ENCODE measurements at regions of chr19 and their contacts with region 1.

Region 1: DNA sequence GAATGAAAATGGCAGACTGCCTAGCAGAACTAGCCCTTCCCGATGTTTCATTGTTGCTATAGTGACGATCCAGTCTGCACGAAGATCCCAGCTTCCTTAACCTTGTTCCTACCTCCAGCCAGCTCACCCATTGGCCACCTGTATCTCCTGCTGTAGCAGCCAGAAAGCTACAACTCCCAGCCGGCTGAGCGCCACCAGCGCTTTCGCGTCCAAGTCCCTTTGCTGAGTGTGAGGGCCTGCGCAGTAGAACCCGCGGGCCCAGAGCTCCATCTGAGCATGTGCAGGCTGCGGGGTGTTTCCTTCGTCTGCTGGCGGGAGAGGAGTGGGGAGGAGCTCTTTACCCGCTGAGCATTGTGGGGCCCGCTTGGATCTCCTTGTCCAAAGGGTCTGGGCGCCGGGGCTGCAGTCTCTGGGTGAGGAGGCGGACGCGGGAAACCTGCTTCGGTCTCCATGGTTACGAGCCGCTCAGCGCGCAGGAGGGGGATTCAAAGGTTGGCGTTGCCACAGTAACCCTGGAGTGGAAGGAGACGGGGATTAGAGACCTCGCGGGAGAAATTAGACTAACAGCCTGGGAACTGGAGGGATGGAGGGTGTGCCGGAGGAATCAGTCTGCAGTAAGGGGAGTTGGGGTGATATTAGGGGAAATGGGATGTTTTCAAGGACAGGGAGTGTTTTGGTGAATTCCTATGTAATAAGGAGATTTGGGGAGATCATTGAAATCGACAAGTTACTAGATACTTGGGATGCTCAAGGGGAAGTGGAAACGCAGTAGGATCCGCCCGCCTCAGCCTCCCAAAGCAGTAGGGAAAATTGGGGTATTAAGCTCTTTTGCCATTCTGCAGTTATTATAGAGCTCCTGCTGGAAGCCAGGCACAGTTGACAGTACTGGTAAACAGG is 33.5 kb downstream of the ZSWIM9 start:
- DNase-seq: peak; percentile 95
- ATAC-seq: peak; percentile 99
- H3K4me3 ChIP-seq: peak overlapping the region; percentile 71 to 79 (median 76)
- H3K27ac ChIP-seq: peak overlapping the region; percentile 69
- H3K4me1 ChIP-seq: peaks cover 18% of the 10 kb centered on the region
- H3K27me3 ChIP-seq: no peaks in the 10 kb centered on the region
- CTCF ChIP-seq: peak; percentile 37; the same call in 1 of the 2 replicates
- EP300 ChIP-seq: no peak
- POLR2A ChIP-seq: peak; percentile 64 to 76; a peak in 3 of 4 replicates
- RAD21 ChIP-seq: no peak

Region 2: GRCh38 chr19:48170038-48170812 is 33.8 kb before region 1 on chr19 and contains the starts of genes LIG1 and ZSWIM9:
- CTCF ChIA-PET with region 1: no interaction called
- POLR2A ChIA-PET with region 1: interaction called, 20 read pairs
- in situ Hi-C with region 1: no loop called
- intact Hi-C with region 1: loop called (anchors 2 kb)
- DNase-seq: peak; percentile 94
- ATAC-seq: peak; percentile 93
- H3K4me3 ChIP-seq: peak within 1 kb of the TSS; percentile 93 to 99 (median 96)
- H3K27ac ChIP-seq: peak within 1 kb of the TSS; percentile 99
- H3K4me1 ChIP-seq: peaks cover 26% of the 10 kb centered on the region
- H3K27me3 ChIP-seq: no peaks in the 10 kb centered on the region; a peak in 1 of 5 replicates
- CTCF ChIP-seq: peak; percentile 55
- EP300 ChIP-seq: no peak; a peak in 1 of 4 replicates
- POLR2A ChIP-seq: peak in 1 of 2 experiments; percentile 75; a peak in 3 of 4 replicates
- RAD21 ChIP-seq: no peak
- total RNA-seq, gene LIG1: 52.1 and 64.4 TPM in 2 replicates
- total RNA-seq, gene ZSWIM9: 0.39 and 1.1 TPM in 2 replicates

Measured in HepG2 (cell line).